ENCODE measurements at regions of chr17 and their contacts with region 1.

Region 1: GRCh38 chr17:7351665-7352501 is at the start of gene KCTD11:
- DNase-seq: peak; percentile 76
- H3K4me3 Mint-ChIP-seq: peak within 1 kb of the TSS; percentile 62
- H3K27ac Mint-ChIP-seq: peak within 1 kb of the TSS; percentile 51
- H3K4me1 Mint-ChIP-seq: peaks cover 43% of the 10 kb centered on the region
- H3K27me3 Mint-ChIP-seq: no peaks in the 10 kb centered on the region
- total RNA-seq, gene KCTD11: 0.41 to 0.47 TPM

Region 2: DNA sequence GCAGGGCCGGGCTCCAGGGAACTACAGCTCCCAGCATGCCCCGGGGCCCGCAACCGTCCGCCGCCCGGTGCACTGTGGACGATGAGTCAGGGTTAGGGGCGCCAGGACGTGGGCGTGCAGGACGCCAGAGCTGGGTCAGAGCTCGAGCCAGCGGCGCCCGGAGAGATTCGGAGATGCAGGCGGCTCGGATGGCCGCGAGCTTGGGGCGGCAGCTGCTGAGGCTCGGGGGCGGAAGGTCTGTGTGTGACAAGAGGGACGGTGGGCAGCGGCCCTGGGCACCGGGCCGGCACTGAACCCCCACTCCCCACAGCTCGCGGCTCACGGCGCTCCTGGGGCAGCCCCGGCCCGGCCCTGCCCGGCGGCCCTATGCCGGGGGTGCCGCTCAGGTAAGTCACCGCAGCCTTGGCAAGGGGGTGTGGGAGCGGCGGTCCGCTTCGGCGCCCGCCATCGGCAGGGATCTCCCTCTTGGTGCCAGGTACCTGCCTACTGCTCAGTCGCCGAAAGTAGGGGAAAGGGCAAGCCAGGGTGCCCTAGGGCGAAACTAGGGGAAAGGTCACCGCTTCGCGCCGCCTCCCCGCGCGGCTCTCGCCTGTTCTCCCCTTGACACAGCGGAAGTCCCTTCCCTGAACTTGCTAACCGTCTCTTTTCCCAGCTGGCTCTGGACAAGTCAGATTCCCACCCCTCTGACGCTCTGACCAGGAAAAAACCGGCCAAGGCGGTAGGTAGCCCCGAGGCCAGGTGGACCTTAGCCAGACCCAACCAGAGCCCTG is 131.9 kb before region 1 on chr17 and contains the starts of genes ACADVL and DLG4:
- CTCF ChIA-PET with region 1: no interaction called
- intact Hi-C with region 1: no loop called
- DNase-seq: peak; percentile 88
- H3K4me3 Mint-ChIP-seq: peak within 1 kb of the TSS; percentile 94
- H3K27ac Mint-ChIP-seq: peak within 1 kb of the TSS; percentile 92
- H3K4me1 Mint-ChIP-seq: peaks cover 54% of the 10 kb centered on the region
- H3K27me3 Mint-ChIP-seq: no peaks in the 10 kb centered on the region
- total RNA-seq, gene ACADVL: 263 to 267 TPM
- total RNA-seq, gene DLG4: 13.6 to 13.8 TPM

Region 3: GRCh38 chr17:7296189-7296902 is 55.5 kb before region 1 on chr17:
- CTCF ChIA-PET with region 1: interaction called, 10 read pairs
- intact Hi-C with region 1: no loop called
- DNase-seq: peak; percentile 72
- H3K4me3 Mint-ChIP-seq: peak overlapping the region; percentile 32
- H3K27ac Mint-ChIP-seq: no peak overlapping the region
- H3K4me1 Mint-ChIP-seq: peaks cover 19% of the 10 kb centered on the region
- H3K27me3 Mint-ChIP-seq: peaks cover 24% of the 10 kb centered on the region

Region 4: GRCh38 chr17:7336240-7337175 is 15.4 kb before region 1 on chr17 and contains the start of gene ACAP1:
- CTCF ChIA-PET with region 1: interaction called, 15 read pairs
- intact Hi-C with region 1: loop called (anchors 2 kb)
- DNase-seq: peak; percentile 95
- H3K4me3 Mint-ChIP-seq: peak within 1 kb of the TSS; percentile 96
- H3K27ac Mint-ChIP-seq: peak within 1 kb of the TSS; percentile 98
- H3K4me1 Mint-ChIP-seq: peaks cover 59% of the 10 kb centered on the region
- H3K27me3 Mint-ChIP-seq: no peaks in the 10 kb centered on the region
- total RNA-seq, gene ACAP1: 309 to 320 TPM

Region 5: DNA sequence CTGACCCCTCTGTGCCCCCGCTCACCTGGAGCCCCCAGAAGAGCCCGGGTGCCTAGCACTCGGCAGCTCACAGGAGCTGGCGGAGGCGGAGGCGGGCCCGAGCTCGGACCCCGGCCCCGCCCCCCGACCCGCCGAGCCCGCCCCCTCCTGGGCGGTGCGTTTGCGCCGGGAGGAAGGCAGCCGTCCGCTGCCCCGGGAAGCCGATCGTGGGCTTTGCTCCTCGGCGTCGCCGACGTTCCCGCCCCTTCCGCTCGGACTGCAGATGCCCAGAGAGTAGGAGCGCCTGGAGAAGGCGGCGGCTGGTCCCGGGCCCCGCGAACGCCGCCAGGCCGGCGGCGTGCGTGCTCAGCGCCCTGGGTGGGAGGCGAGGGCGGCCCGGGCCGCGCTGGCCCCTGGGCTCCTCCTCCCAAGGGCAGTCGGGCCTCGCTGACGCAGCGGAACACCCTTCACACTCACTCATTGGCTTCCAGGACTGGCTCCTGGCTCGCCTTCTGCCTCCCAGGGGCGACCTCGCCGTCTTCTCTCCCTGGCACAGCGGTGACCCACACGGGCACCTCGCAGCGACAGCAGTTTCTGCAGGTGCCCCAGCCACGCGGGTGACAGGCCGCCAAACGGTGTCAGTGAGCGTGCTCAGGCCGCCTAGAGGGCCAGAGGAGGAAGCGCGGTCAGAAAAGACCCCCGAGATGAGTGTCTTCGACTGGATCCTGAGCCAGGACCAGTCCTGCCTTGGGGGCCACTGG is 42.7 kb after region 1 on chr17 and contains the start of gene PLSCR3:
- CTCF ChIA-PET with region 1: interaction called, 5 read pairs
- intact Hi-C with region 1: loop called (anchors 5 kb)
- DNase-seq: peak; percentile 80
- H3K4me3 Mint-ChIP-seq: peak within 1 kb of the TSS; percentile 95
- H3K27ac Mint-ChIP-seq: peak within 1 kb of the TSS; percentile 88
- H3K4me1 Mint-ChIP-seq: peaks cover 30% of the 10 kb centered on the region
- H3K27me3 Mint-ChIP-seq: no peaks in the 10 kb centered on the region
- total RNA-seq, gene PLSCR3: 58.6 to 59.4 TPM

Region 6: DNA sequence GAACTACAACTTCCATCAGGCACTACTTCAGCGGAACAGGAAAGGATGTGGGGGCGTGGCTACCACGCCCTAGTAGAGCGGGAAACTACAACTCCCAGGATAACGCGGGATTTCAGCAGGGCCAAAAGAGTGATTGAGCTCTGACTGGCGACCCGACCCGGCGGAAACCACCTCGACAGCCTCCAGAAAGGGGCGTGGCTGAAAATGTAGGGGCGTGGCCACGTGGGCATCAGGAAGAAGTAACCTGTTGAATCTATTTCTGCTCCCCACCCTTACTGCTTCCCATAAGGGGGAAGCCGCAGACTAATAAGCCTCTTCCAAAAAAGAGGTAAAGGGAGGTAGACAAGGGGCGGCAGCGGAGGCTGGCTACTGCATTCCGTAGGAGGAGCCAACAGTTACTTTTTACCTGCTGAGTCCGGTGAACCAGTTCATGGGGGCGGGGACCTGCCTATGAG is 83.4 kb after region 1 on chr17 and contains the start of gene TMEM102:
- CTCF ChIA-PET with region 1: interaction called, 34 read pairs
- intact Hi-C with region 1: loop called (anchors 1 kb)
- DNase-seq: peak; percentile 99
- H3K4me3 Mint-ChIP-seq: peak within 1 kb of the TSS; percentile 92
- H3K27ac Mint-ChIP-seq: peak within 1 kb of the TSS; percentile 91
- H3K4me1 Mint-ChIP-seq: peaks cover 36% of the 10 kb centered on the region
- H3K27me3 Mint-ChIP-seq: peaks cover 12% of the 10 kb centered on the region
- total RNA-seq, gene TMEM102: 3.3 to 3.5 TPM

Region 7: DNA sequence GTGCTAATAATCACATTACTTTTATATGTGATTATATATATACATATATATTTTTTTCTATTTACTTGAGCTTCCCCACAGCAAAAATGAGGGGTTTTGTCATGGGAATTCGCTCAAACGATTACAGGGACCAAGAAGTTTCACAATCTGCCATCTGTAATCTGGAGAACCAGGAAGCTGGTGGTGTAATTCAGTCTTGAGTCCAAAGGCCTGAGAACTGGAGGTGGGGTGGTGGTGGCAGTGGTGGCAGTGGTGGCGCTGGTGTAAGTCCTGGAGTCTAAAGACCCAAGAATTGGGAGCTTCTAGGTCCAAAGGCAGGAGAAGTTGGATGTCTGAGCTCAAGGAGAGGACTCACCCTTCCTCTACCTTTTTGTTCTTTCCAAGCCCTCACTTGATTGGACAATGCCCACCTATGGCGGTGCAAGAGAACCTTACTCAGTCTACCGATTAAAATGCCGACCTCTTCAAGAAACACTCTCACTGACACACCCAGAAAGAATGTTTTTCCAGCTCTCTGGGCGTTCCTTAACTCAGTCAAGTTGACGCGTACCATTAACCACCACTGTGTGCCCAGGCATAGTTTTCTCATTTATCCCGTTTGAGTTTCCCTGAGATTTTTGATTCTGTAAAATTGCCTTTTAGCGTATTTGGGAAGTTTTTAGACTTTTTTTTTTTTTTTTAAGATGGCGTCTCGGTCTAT is 164.2 kb after region 1 on chr17:
- CTCF ChIA-PET with region 1: interaction called, 10 read pairs
- intact Hi-C with region 1: no loop called
- DNase-seq: no peak
- H3K4me3 Mint-ChIP-seq: no peak overlapping the region
- H3K27ac Mint-ChIP-seq: no peak overlapping the region
- H3K4me1 Mint-ChIP-seq: peaks cover 2% of the 10 kb centered on the region
- H3K27me3 Mint-ChIP-seq: no peaks in the 10 kb centered on the region